ENCODE measurements at regions of chr21 and their contacts with region 1.

Region 1: DNA sequence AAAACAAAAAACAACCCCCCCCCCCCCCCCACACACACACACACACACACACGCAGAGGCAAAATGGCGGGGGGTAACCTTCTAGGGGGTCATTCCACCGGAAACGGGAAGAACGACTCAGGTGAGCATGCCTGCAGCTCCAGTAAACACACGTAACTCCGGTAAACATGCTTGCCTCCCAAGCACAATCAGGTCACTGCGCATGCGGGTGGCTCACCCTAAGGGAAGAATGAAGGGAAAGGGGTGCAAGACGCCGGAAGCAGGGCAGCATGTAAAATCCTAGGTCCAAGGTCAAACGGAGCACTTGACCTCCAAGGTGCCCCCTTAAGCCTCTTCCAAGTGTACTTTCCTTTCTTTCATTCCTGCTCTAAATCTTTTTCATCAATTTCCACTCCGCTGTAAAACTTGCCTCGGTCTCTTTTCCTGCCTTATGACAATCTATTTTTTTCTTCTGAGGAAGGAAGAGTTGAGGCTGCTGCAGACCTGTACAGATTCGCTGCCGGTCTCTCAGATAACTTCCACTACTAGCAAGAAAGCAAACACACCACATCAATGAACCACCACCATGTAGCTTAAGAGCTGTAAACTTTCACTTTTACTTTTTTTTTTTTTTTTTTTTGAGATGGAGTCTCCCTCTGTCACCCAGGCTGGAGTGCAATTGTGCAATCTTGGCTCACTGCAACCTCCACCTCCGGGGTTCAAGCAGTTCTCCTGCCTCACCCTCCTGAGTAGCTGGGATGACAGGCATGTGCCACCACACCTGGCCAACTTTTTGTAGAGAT is 21.0 kb upstream of the CBR3 start:
- DNase-seq: no peak
- ATAC-seq: peak; percentile 56
- H3K4me3 ChIP-seq: peak overlapping the region; percentile 30; the same call in 1 of the 2 replicates
- H3K27ac ChIP-seq: no peak overlapping the region
- H3K4me1 ChIP-seq: peaks cover 7% of the 10 kb centered on the region
- H3K27me3 ChIP-seq: no peaks in the 10 kb centered on the region
- CTCF ChIP-seq: no peak
- EP300 ChIP-seq: no peak
- POLR2A ChIP-seq: 0 out of 2 replicates have a peak, but pooled peaks have one; percentile 23
- RAD21 ChIP-seq: no peak

Region 2: GRCh38 chr21:35840197-35840799 is 273.5 kb before region 1 on chr21:
- CTCF ChIA-PET with region 1: interaction called, 12 read pairs
- POLR2A ChIA-PET with region 1: no interaction called
- RAD21 ChIA-PET with region 1: no interaction called
- SMC1A ChIA-PET with region 1: no interaction called
- in situ Hi-C with region 1: no loop called
- intact Hi-C with region 1: loop called (anchors 5 kb)
- DNase-seq: no peak
- ATAC-seq: peak; percentile 76
- H3K4me3 ChIP-seq: no peak overlapping the region
- H3K27ac ChIP-seq: no peak overlapping the region
- H3K4me1 ChIP-seq: no peaks in the 10 kb centered on the region
- H3K27me3 ChIP-seq: peaks cover 0 to 1% of the 10 kb centered on the region in 2 experiments; a peak in 1 of 4 replicates
- CTCF ChIP-seq: peak; percentile 73 to 76 (median 74)
- EP300 ChIP-seq: no peak
- POLR2A ChIP-seq: no peak
- RAD21 ChIP-seq: peak; percentile 87

Region 3: GRCh38 chr21:35940074-35940927 is 173.5 kb before region 1 on chr21:
- CTCF ChIA-PET with region 1: no interaction called
- POLR2A ChIA-PET with region 1: no interaction called
- RAD21 ChIA-PET with region 1: no interaction called
- SMC1A ChIA-PET with region 1: no interaction called
- in situ Hi-C with region 1: no loop called
- intact Hi-C with region 1: loop called (anchors 10 kb)
- DNase-seq: no peak
- ATAC-seq: peak; percentile 82
- H3K4me3 ChIP-seq: no peak overlapping the region
- H3K27ac ChIP-seq: no peak overlapping the region
- H3K4me1 ChIP-seq: no peaks in the 10 kb centered on the region
- H3K27me3 ChIP-seq: no peaks in the 10 kb centered on the region
- CTCF ChIP-seq: peak; percentile 46 to 59 (median 47); a peak in 5 of 6 replicates
- EP300 ChIP-seq: no peak
- POLR2A ChIP-seq: no peak
- RAD21 ChIP-seq: peak; percentile 74

Region 4: DNA sequence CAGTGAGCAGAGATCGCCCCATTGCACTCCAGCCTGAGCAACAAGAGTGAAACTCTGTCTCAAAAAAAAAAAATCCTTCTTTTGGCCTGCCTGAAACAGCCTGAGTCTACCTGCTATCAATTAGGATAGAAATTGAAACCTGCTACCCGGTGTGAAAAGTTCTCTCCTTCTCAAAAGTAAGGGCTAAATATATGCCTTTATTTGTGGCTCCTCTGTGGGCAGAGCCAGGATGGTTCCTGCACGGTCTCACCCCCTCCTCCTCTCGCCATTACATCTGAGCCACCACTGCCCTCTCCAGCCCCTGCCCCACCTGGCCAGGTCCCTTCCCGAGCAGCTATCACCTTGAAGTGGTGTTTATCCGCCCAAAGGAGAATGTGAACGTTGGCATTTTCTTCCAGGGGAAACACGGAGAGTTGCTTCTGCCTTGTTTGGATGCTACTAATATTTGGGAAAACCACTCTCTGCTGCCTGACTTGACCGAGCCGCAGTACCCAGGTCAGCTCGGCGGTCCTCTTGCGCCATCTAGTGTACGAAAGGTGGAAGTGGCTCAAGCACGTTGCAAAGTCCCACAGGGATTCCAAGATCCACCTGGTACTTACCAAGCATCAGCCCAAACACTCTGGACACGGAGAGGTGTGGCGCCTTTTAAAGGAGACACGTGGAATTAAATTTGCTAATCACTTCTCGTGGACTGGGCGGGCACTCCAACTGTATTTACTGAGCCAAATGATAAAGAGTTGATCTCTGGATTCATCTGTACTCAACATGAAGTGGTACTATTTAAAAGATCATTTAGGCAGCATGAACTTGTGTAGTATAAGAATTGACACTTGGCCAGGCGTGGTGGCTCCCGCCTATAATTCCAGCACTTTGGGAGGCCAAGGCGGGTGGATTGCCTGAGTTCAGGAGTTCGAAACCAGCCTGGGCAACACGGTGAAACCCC is 85.4 kb before region 1 on chr21:
- CTCF ChIA-PET with region 1: interaction called, 12 read pairs
- POLR2A ChIA-PET with region 1: interaction called, 5 read pairs
- RAD21 ChIA-PET with region 1: interaction called, 9 read pairs
- SMC1A ChIA-PET with region 1: interaction called, 4 read pairs
- in situ Hi-C with region 1: no loop called
- intact Hi-C with region 1: loop called (anchors 2 kb)
- DNase-seq: peak; percentile 23
- ATAC-seq: peak; percentile 97
- H3K4me3 ChIP-seq: no peak overlapping the region
- H3K27ac ChIP-seq: no peak overlapping the region
- H3K4me1 ChIP-seq: peaks cover 5% of the 10 kb centered on the region
- H3K27me3 ChIP-seq: no peaks in the 10 kb centered on the region
- CTCF ChIP-seq: peak; percentile 94 to 98 (median 97)
- EP300 ChIP-seq: no peak
- POLR2A ChIP-seq: no peak
- RAD21 ChIP-seq: peak; percentile 95

Region 5: GRCh38 chr21:36060159-36060921 is 53.5 kb before region 1 on chr21 and contains the start of gene SETD4:
- CTCF ChIA-PET with region 1: interaction called, 5 read pairs
- POLR2A ChIA-PET with region 1: interaction called, 6 read pairs
- RAD21 ChIA-PET with region 1: interaction called, 10 read pairs
- SMC1A ChIA-PET with region 1: interaction called, 4 read pairs
- in situ Hi-C with region 1: no loop called
- intact Hi-C with region 1: no loop called
- DNase-seq: peak; percentile 73
- ATAC-seq: peak; percentile 94
- H3K4me3 ChIP-seq: peak within 1 kb of the TSS; percentile 87
- H3K27ac ChIP-seq: peak within 1 kb of the TSS; percentile 79
- H3K4me1 ChIP-seq: no peaks in the 10 kb centered on the region
- H3K27me3 ChIP-seq: no peaks in the 10 kb centered on the region
- CTCF ChIP-seq: no peak
- EP300 ChIP-seq: no peak
- POLR2A ChIP-seq: peak; percentile 90
- RAD21 ChIP-seq: no peak
- polyA plus RNA-seq, gene SETD4: 26.2 to 37.0 TPM

Region 6: DNA sequence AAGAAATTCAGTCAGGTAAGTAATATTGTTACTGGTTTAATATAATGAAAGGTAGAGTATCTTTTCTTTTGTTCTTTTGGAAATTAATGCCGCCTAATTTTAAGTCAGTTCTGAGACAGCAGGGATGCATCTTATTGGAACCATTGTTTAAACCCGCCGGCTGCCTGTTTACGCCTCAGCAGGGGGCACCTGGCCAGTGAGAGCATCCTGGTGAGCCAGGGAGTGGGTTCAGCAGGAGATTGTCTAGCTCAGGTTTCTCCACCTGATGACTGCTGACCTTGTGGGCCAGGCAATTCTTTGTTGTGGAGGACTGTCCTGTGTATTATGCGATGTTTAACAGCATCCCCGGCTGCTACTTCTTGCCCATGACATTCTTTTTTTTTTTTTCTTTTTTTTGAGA is 301.5 kb after region 1 on chr21:
- CTCF ChIA-PET with region 1: no interaction called
- POLR2A ChIA-PET with region 1: no interaction called
- RAD21 ChIA-PET with region 1: no interaction called
- SMC1A ChIA-PET with region 1: no interaction called
- in situ Hi-C with region 1: no loop called
- intact Hi-C with region 1: no loop called
- DNase-seq: no peak
- ATAC-seq: no peak
- H3K4me3 ChIP-seq: no peak overlapping the region
- H3K27ac ChIP-seq: no peak overlapping the region
- H3K4me1 ChIP-seq: no peaks in the 10 kb centered on the region
- H3K27me3 ChIP-seq: no peaks in the 10 kb centered on the region
- CTCF ChIP-seq: no peak
- EP300 ChIP-seq: no peak
- POLR2A ChIP-seq: no peak
- RAD21 ChIP-seq: no peak

Measured in GM12878 (cell line).